ENCODE measurements at regions of chr2 and their contacts with region 1.

Region 1: GRCh38 chr2:36663851-36664695 is 32.4 kb upstream of the VIT start:
- DNase-seq: peak; percentile 55 to 85
- ATAC-seq: peak; percentile 96 to 97
- H3K4me3 ChIP-seq: no peak overlapping the region
- H3K27ac ChIP-seq: peak overlapping the region; percentile 35 to 68; a peak in 5 of 6 replicates
- H3K4me1 ChIP-seq: peaks cover 29% of the 10 kb centered on the region
- CTCF ChIP-seq: peak; percentile 98
- EP300 ChIP-seq: no peak
- POLR2A ChIP-seq: no peak
- RAD21 ChIP-seq: peak; percentile 98 to 99

Region 2: GRCh38 chr2:36348721-36349120 is 315.4 kb before region 1 on chr2:
- CTCF ChIA-PET with region 1: interaction called, 27 read pairs
- POLR2A ChIA-PET with region 1: no interaction called
- DNase-seq: no peak
- ATAC-seq: no peak
- H3K4me3 ChIP-seq: no peak overlapping the region
- H3K27ac ChIP-seq: no peak overlapping the region
- H3K4me1 ChIP-seq: peaks cover 34% of the 10 kb centered on the region
- CTCF ChIP-seq: no peak
- EP300 ChIP-seq: no peak; a peak in 1 of 5 replicates
- POLR2A ChIP-seq: no peak
- RAD21 ChIP-seq: no peak

Region 3: GRCh38 chr2:36362291-36362690 is 301.8 kb before region 1 on chr2:
- CTCF ChIA-PET with region 1: interaction called, 12 read pairs
- POLR2A ChIA-PET with region 1: no interaction called
- DNase-seq: no peak
- ATAC-seq: peak in 1 of 2 experiments; percentile 1; a peak in 2 of 6 replicates
- H3K4me3 ChIP-seq: peak overlapping the region; percentile 5; the same call in 1 of the 3 replicates
- H3K27ac ChIP-seq: peak overlapping the region; percentile 45 to 76; a peak in 5 of 6 replicates
- H3K4me1 ChIP-seq: peaks cover 82% of the 10 kb centered on the region
- CTCF ChIP-seq: no peak
- EP300 ChIP-seq: no peak
- POLR2A ChIP-seq: no peak
- RAD21 ChIP-seq: no peak; a peak in 1 of 5 replicates

Region 4: DNA sequence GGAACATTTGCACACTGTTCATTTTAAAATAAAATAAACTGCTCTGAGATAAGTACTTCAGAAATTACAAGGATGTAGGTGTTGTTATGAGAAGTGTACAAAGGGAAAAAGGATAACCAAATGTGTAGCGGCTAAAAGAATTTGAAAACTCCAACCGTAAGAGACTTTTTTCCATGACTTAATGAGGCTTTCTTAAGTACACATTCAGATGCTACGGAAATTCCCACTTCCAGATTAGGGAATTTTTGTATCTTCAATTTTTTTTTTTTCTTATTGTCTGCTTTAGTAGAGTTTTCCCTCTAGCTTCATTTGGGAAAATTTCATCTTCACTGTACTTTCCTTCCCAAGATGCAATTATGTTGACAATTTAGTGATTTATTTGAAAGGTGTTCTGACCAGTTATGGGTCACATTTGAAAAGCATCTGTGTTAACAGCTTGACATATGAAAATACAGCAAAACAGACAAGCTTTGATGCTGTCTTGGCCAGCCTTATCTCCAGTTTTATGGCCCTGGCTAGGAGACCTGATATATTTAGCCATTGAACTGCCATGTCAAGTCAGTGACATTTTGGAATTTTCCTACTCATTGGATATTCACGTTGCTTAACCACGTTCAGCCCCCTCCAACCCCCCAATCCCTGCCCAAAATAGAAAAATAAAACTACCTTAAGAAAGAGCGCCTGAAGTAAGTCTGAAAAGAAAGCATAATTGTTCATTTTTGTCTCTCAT is 171.7 kb before region 1 on chr2:
- CTCF ChIA-PET with region 1: interaction called, 10 read pairs
- POLR2A ChIA-PET with region 1: no interaction called
- DNase-seq: peak in 1 of 2 experiments; percentile 40
- ATAC-seq: peak in 1 of 2 experiments; percentile 7; a peak in 1 of 6 replicates
- H3K4me3 ChIP-seq: no peak overlapping the region
- H3K27ac ChIP-seq: peak overlapping the region; percentile 4 to 63; a peak in 3 of 6 replicates
- H3K4me1 ChIP-seq: peaks cover 80% of the 10 kb centered on the region
- CTCF ChIP-seq: no peak
- EP300 ChIP-seq: no peak
- POLR2A ChIP-seq: no peak
- RAD21 ChIP-seq: no peak

Region 5: GRCh38 chr2:36523153-36523552 is 140.9 kb before region 1 on chr2:
- CTCF ChIA-PET with region 1: interaction called, 20 read pairs
- POLR2A ChIA-PET with region 1: no interaction called
- DNase-seq: no peak
- ATAC-seq: no peak
- H3K4me3 ChIP-seq: no peak overlapping the region
- H3K27ac ChIP-seq: no peak overlapping the region
- H3K4me1 ChIP-seq: no peaks in the 10 kb centered on the region
- CTCF ChIP-seq: no peak
- EP300 ChIP-seq: no peak
- POLR2A ChIP-seq: no peak
- RAD21 ChIP-seq: no peak

Region 6: DNA sequence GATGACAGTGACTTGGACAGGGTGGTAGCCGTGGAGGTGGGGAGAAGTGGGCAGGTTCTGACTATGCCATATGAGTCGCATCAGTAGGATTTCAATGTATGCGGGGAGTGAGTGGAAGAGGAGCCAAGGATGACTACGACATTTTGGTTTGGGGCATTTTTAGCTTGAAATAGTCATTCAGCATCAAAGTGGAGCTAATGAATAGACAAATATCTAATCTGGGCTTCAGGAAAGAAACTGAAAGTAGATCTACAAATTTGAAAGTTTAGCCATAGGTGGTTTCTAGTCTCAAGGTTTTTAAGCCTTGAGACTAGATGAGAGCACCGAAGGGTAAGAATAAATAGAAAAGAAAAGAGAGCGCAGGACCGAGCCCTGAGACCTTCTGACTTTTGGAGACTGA is 124.4 kb before region 1 on chr2:
- CTCF ChIA-PET with region 1: interaction called, 18 read pairs
- POLR2A ChIA-PET with region 1: no interaction called
- DNase-seq: no peak
- ATAC-seq: peak in 1 of 2 experiments; percentile 15; a peak in 3 of 6 replicates
- H3K4me3 ChIP-seq: no peak overlapping the region
- H3K27ac ChIP-seq: peak overlapping the region in 1 of 2 experiments; percentile 0; a peak in 2 of 6 replicates
- H3K4me1 ChIP-seq: peaks cover 16% of the 10 kb centered on the region
- CTCF ChIP-seq: no peak
- EP300 ChIP-seq: no peak
- POLR2A ChIP-seq: no peak
- RAD21 ChIP-seq: no peak

Region 7: DNA sequence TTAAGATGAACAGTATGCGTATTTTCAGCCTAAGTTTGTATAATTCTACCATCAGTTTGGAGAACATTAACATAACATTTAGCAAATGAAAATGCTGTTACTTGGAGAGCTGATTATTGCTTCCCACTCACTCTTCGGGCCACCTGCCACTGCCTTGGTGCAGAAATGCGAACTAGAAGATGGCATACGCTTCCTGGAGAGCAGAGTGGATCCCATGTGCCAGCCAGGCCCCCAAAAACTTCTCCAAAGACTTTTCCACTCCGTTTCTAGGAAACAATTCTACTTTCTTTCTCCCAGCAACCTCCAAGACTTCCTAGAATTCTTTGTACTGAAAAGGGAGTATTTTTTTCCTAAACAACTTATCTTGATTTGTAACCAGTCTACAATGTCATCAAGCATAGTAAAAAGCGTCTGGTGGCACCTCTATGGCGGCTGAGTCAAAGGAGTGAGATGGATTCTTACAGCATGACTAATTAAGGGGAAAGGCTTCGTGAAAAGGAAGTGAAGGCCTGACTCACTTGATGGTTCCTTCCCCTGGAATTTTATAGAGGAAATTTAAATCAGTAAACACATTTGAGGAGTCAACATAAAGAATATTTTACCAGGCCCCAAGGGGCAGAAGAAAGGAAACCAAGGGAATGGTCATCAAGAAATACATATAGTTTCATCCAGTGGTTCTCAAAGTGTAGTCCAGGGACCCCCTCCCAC is 102.7 kb before region 1 on chr2:
- CTCF ChIA-PET with region 1: interaction called, 35 read pairs
- POLR2A ChIA-PET with region 1: no interaction called
- DNase-seq: peak; percentile 72 to 89
- ATAC-seq: peak; percentile 82 to 85
- H3K4me3 ChIP-seq: peak overlapping the region; percentile 14; the same call in 2 of the 3 replicates
- H3K27ac ChIP-seq: peak overlapping the region; percentile 84 to 88
- H3K4me1 ChIP-seq: peaks cover 70% of the 10 kb centered on the region
- CTCF ChIP-seq: no peak
- EP300 ChIP-seq: peak; percentile 56 to 78; a peak in 2 of 5 replicates
- POLR2A ChIP-seq: no peak
- RAD21 ChIP-seq: 0 out of 5 replicates have a peak, but pooled peaks of 1 of the 2 experiments have one; percentile 9

Region 8: DNA sequence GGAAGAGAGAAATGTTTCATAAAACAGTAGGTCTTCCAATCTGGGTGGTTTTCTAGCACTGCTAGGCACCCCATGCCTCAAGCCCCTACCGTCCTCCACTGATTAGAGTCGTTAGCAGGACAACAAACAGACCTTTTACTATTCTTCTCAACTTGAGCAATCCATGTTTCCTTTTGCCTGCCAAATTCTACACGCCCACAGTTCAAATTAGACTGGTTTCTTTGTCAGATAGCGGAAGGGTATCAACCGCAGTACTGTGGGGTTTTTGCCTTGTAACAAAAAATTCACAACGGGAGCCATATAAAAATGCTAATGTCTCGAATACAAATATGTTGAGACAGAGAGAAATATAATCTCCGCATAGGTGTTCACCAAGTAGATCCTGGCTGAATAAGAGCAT is 92.4 kb after region 1 on chr2:
- CTCF ChIA-PET with region 1: no interaction called
- POLR2A ChIA-PET with region 1: no interaction called
- DNase-seq: no peak
- ATAC-seq: no peak
- H3K4me3 ChIP-seq: no peak overlapping the region
- H3K27ac ChIP-seq: no peak overlapping the region
- H3K4me1 ChIP-seq: no peaks in the 10 kb centered on the region
- CTCF ChIP-seq: no peak
- EP300 ChIP-seq: no peak
- POLR2A ChIP-seq: no peak
- RAD21 ChIP-seq: no peak